Keratinocyte (primary cell): ENCODE measurements at regions of chr10 and their contacts with region 1.

Region 1: DNA sequence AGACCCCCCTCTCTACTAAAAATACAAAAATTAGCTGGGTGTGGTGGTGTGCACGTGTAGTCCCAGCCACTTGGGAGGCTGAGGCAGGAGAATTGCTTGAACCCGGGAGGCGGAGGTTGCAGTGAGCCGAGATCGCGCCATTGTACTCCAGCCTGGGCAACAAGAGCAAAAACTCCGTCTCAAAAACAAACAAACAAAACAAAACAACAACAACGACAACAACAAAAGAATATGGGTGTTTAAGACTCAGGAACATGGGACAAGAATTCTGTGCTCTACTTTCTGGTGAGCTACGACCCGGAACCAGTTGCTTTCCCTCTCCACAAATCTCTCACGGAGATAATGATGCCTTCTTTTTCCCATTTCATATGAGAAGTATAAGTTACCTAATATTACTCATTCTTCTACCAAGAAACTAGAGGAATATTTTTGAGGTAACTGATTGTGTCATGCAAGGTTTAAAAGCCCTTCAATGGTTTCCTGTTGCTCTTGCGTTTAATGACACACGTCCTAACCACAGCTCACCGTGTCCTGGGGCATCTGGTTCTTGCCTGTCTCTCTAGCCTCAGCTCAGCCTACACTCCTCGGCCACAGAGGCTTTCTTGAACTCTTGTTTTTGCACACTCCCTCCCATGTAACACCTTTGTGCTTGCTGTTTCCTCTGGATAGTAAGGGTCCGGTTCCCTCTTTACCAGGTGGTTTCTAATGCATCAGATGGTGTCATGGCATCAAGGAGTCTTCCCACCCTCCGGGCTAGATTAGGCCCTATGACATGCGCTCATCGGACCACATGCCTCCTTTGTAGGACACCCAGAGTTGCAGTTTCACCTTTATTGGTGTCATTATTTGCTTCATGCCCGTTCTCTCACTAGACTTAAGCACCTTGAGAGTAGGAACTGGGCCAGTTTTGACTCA is 67.5 kb downstream of the PFKFB3 start:
- DNase-seq: no peak
- H3K4me3 ChIP-seq: no peak overlapping the region
- H3K27ac ChIP-seq: no peak overlapping the region
- H3K4me1 ChIP-seq: peaks cover 8% of the 10 kb centered on the region
- H3K27me3 ChIP-seq: no peaks in the 10 kb centered on the region
- CTCF ChIP-seq: no peak

Region 2: DNA sequence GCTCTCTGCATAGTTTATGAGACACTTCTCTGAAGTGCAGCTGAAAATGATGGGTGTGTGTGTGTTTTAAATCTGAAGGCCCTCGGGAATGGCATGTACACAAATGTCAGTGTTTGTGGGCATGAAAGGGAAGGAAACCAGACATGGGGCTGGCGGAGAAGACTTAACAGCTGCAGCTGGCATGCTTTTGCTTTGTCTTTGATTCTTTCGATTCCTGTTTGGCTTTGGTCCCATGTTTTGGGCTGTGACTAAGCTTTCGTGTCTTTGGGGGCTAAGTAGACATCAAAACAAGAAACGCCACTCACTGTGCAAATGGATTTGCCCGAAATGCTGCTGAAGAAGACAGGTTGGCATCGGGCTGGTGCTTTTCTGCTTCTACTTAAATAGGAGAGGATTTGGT is 111.9 kb after region 1 on chr10:
- dilution Hi-C with region 1: loop called (anchors 25 kb)
- DNase-seq: no peak
- H3K4me3 ChIP-seq: no peak overlapping the region
- H3K27ac ChIP-seq: no peak overlapping the region
- H3K4me1 ChIP-seq: no peaks in the 10 kb centered on the region
- H3K27me3 ChIP-seq: no peaks in the 10 kb centered on the region
- CTCF ChIP-seq: no peak

Region 3: GRCh38 chr10:6498771-6499170 is 228.6 kb after region 1 on chr10:
- dilution Hi-C with region 1: no loop called
- DNase-seq: no peak
- H3K4me3 ChIP-seq: no peak overlapping the region
- H3K27ac ChIP-seq: no peak overlapping the region
- H3K4me1 ChIP-seq: peaks cover 46% of the 10 kb centered on the region
- H3K27me3 ChIP-seq: no peaks in the 10 kb centered on the region
- CTCF ChIP-seq: no peak